ENCODE measurements at regions of chr15 and their contacts with region 1.

Region 1: DNA sequence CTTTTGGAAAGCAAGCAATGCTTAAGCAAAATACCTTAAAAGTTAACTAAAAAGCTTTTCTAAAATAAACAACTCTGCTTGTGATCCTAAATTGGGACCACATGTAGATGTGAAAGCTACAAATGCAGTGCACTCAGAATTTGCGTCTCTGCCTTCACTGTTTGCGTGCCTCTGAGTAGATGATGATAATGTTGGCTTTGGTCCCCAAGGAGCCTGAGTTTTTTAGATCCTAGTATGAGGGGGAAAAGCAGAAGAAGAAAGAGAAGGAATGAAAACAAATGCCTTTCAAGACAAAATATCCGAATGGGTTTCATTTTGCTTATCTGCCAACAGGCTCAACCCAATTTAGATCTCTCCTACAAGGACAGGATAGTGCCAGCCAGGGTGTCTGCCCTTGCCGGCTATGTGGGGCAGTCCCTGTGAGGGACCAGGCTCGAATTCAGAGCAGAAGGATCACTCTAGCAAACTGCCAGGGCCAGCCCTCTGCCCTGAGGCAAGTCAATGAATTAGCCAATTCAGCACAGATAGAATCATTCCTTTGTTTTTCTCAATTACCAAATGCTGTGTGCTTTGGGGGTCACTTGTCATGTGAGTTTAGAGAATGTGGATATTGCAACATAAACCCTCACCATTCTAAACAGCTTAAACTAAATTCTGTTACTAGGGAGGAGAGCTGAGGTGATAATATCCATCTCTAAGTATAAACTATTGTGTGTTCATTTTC is 28.5 kb downstream of the SCG5 start:
- DNase-seq: no peak
- H3K4me3 ChIP-seq: no peak overlapping the region
- H3K4me3 Mint-ChIP-seq: no peak overlapping the region
- H3K27ac ChIP-seq: no peak overlapping the region
- H3K27ac Mint-ChIP-seq: no peak overlapping the region
- H3K4me1 ChIP-seq: no peaks in the 10 kb centered on the region
- H3K4me1 Mint-ChIP-seq: no peaks in the 10 kb centered on the region
- H3K27me3 ChIP-seq: no peaks in the 10 kb centered on the region
- H3K27me3 Mint-ChIP-seq: no peaks in the 10 kb centered on the region

Region 2: GRCh38 chr15:32657198-32657883 is 12.7 kb before region 1 on chr15:
- CTCF ChIA-PET with region 1: interaction called, 23 read pairs
- POLR2A ChIA-PET with region 1: no interaction called
- intact Hi-C with region 1: no loop called
- DNase-seq: peak in 3 of 5 donors; percentile 9 to 18 (median 15)
- H3K4me3 ChIP-seq: no peak overlapping the region
- H3K4me3 Mint-ChIP-seq: peak overlapping the region; percentile 3 to 74 (median 50)
- H3K27ac ChIP-seq: no peak overlapping the region
- H3K27ac Mint-ChIP-seq: peak overlapping the region in 6 of 7 donors; percentile 9 to 50 (median 37)
- H3K4me1 ChIP-seq: peaks cover 12% of the 10 kb centered on the region
- H3K4me1 Mint-ChIP-seq: peaks cover 8 to 10% (median 10%) of the 10 kb centered on the region in 4 donors
- H3K27me3 ChIP-seq: no peaks in the 10 kb centered on the region
- H3K27me3 Mint-ChIP-seq: no peaks in the 10 kb centered on the region

Region 3: DNA sequence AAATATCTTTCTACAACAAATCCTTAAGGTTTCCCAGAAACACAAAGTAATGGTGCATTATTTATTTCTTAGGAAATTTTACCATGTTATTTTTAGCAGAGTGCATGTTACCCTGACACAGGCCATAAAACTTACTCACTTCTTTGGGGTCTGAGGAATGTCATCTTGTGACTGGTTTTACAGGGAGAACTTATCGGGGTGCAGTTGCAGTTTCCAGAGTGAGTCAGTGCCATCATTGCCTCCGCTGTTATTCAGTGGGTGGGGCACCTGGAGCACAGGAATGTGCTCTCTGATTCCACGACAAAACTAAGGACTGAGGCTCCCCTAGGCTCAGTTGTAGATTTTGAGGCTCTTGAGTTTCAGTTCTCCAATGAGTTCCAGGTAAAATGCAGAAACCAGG is 36.6 kb after region 1 on chr15:
- CTCF ChIA-PET with region 1: no interaction called
- POLR2A ChIA-PET with region 1: no interaction called
- intact Hi-C with region 1: no loop called
- DNase-seq: no peak
- H3K4me3 ChIP-seq: no peak overlapping the region
- H3K4me3 Mint-ChIP-seq: no peak overlapping the region
- H3K27ac ChIP-seq: no peak overlapping the region
- H3K27ac Mint-ChIP-seq: no peak overlapping the region
- H3K4me1 ChIP-seq: no peaks in the 10 kb centered on the region
- H3K4me1 Mint-ChIP-seq: no peaks in the 10 kb centered on the region
- H3K27me3 ChIP-seq: no peaks in the 10 kb centered on the region
- H3K27me3 Mint-ChIP-seq: peaks cover 20 to 21% of the 10 kb centered on the region in 2 donors

Measured in CD4-positive, alpha-beta memory T cell (primary cell).